ENCODE measurements at regions of chr11 and their contacts with region 1.

Region 1: GRCh38 chr11:6596239-6596877 is 7.1 kb downstream of the RRP8 start:
- DNase-seq: no peak
- H3K4me3 ChIP-seq: no peak overlapping the region
- H3K27ac ChIP-seq: no peak overlapping the region
- H3K4me1 ChIP-seq: peaks cover 3 to 27% (median 15%) of the 10 kb centered on the region in 6 donors
- H3K27me3 ChIP-seq: no peaks in the 10 kb centered on the region
- CTCF ChIP-seq: no peak
- POLR2A ChIP-seq: no peak

Region 2: DNA sequence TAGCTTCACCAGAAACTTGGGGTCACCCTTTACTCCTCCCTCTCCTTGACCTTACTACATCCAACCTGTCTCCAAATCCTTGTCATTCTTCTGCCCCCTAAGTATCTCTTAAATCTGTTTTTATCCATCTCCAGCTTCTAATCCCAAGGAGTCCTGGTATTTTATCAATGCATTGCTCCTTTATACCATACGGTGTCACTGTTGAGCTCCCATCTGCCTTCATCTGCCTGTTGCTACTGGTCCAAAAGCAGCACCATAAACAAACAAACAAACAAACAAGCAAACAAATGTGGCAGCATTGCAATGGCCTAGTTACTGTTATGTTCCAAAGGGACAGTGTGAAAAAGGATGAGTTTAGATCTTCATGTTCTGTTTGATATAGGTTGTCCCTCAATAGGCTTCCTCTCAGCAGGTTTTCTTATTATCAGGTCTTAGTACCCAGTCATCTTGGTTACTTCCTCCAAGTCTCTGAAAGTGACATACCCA is 65.0 kb before region 1 on chr11:
- intact Hi-C with region 1: loop called (anchors 10 kb)
- DNase-seq: no peak
- H3K4me3 ChIP-seq: no peak overlapping the region
- H3K27ac ChIP-seq: no peak overlapping the region
- H3K4me1 ChIP-seq: peaks cover 0 to 7% (median 0%) of the 10 kb centered on the region in 6 donors
- H3K27me3 ChIP-seq: no peaks in the 10 kb centered on the region
- CTCF ChIP-seq: peak; percentile 47 to 89 (median 71)
- POLR2A ChIP-seq: no peak

Region 3: GRCh38 chr11:6670202-6670830 is 74.0 kb after region 1 on chr11:
- intact Hi-C with region 1: no loop called
- DNase-seq: no peak
- H3K4me3 ChIP-seq: no peak overlapping the region
- H3K27ac ChIP-seq: no peak overlapping the region
- H3K4me1 ChIP-seq: peaks cover 5 to 40% (median 19%) of the 10 kb centered on the region in 6 donors
- H3K27me3 ChIP-seq: no peaks in the 10 kb centered on the region
- CTCF ChIP-seq: no peak
- POLR2A ChIP-seq: no peak

Region 4: GRCh38 chr11:6771926-6772893 is 175.9 kb after region 1 on chr11 and contains the start of gene OR2AG2:
- intact Hi-C with region 1: no loop called
- DNase-seq: no peak
- H3K4me3 ChIP-seq: no peak within 1 kb of the TSS
- H3K27ac ChIP-seq: peak within 1 kb of the TSS in 4 of 8 donors; percentile 21 to 70 (median 60)
- H3K4me1 ChIP-seq: peaks cover 0 to 11% (median 4%) of the 10 kb centered on the region in 6 donors
- H3K27me3 ChIP-seq: no peaks in the 10 kb centered on the region
- CTCF ChIP-seq: no peak
- POLR2A ChIP-seq: no peak
- total RNA-seq, gene OR2AG2: 0.15 to 0.34 (median 0.20) TPM in 5 of 7 donors, not detected in the others

Measured in spleen (tissue), 13 donors.